Naive thymus-derived CD4-positive, alpha-beta T cell (primary cell): ENCODE measurements at regions of chr3 and their contacts with region 1.

Region 1: DNA sequence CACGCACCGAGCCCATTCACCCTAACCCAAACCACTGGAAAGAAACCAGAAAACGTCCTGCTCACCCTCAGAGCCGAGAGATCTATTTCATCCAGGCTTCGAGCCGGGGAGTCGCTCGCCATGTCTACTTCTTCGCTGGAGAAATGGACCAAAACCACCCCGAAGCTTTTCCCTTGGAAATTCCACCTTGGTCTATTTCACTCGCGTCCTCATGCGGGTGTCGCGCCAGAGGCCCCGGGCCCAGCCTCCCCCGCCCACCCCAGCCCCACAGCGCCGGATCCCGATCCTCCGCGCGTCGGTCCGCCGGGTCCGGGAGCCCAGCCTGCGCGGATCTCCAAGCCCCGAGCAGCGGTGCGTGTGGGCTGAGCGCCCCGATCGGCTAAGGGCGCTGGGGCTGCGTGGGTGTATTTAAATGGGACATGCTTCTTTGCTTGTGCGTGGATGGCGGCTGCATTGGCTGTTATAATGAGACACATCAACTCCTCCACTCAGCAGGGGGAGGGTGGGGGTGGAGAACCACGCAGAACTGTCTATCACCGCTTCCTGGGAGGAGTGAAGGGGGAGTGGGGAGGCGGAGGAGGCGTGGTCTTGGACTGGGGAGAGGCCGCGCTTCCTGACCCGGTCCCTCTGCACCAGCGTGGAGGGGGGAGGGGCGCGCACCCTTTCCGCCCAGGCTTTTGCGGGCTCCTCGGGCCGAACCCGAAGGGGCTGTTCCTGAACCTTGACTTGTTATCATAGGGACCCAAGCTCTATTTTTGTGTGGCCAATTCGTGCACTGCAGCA is at the start of gene TNIK:
- DNase-seq: peak; percentile 73 to 99 (median 91)
- ATAC-seq: peak; percentile 92
- H3K4me3 ChIP-seq: peak within 1 kb of the TSS; percentile 87
- H3K4me3 Mint-ChIP-seq: peak within 1 kb of the TSS; percentile 91 to 98 (median 94)
- H3K27ac ChIP-seq: peak within 1 kb of the TSS; percentile 81
- H3K27ac Mint-ChIP-seq: peak within 1 kb of the TSS; percentile 88 to 96 (median 91)
- H3K4me1 ChIP-seq: peaks cover 15 to 29% of the 10 kb centered on the region in 2 donors
- H3K4me1 Mint-ChIP-seq: peaks cover 19 to 46% (median 45%) of the 10 kb centered on the region in 7 donors
- H3K27me3 ChIP-seq: no peaks in the 10 kb centered on the region
- H3K27me3 Mint-ChIP-seq: no peaks in the 10 kb centered on the region
- total RNA-seq, gene TNIK: 61.6 to 74.9 (median 73.6) TPM

Region 2: GRCh38 chr3:169764452-169765274 is 1695.5 kb before region 1 on chr3 and contains the start of gene TERC:
- CTCF ChIA-PET with region 1: no interaction called
- POLR2A ChIA-PET with region 1: no interaction called
- intact Hi-C with region 1: loop called in 1 of 2 experiments (anchors 2 kb)
- DNase-seq: peak; percentile 72 to 96 (median 94)
- ATAC-seq: peak; percentile 91
- H3K4me3 ChIP-seq: peak within 1 kb of the TSS; percentile 88
- H3K4me3 Mint-ChIP-seq: peak within 1 kb of the TSS; percentile 89 to 99 (median 98)
- H3K27ac ChIP-seq: peak within 1 kb of the TSS; percentile 98
- H3K27ac Mint-ChIP-seq: peak within 1 kb of the TSS; percentile 96 to 100 (median 99)
- H3K4me1 ChIP-seq: peaks cover 11 to 18% of the 10 kb centered on the region in 2 donors
- H3K4me1 Mint-ChIP-seq: peaks cover 6 to 39% (median 33%) of the 10 kb centered on the region in 7 donors
- H3K27me3 ChIP-seq: no peaks in the 10 kb centered on the region
- H3K27me3 Mint-ChIP-seq: no peaks in the 10 kb centered on the region
- total RNA-seq, gene TERC: 4.0 to 19.4 (median 7.4) TPM

Region 3: DNA sequence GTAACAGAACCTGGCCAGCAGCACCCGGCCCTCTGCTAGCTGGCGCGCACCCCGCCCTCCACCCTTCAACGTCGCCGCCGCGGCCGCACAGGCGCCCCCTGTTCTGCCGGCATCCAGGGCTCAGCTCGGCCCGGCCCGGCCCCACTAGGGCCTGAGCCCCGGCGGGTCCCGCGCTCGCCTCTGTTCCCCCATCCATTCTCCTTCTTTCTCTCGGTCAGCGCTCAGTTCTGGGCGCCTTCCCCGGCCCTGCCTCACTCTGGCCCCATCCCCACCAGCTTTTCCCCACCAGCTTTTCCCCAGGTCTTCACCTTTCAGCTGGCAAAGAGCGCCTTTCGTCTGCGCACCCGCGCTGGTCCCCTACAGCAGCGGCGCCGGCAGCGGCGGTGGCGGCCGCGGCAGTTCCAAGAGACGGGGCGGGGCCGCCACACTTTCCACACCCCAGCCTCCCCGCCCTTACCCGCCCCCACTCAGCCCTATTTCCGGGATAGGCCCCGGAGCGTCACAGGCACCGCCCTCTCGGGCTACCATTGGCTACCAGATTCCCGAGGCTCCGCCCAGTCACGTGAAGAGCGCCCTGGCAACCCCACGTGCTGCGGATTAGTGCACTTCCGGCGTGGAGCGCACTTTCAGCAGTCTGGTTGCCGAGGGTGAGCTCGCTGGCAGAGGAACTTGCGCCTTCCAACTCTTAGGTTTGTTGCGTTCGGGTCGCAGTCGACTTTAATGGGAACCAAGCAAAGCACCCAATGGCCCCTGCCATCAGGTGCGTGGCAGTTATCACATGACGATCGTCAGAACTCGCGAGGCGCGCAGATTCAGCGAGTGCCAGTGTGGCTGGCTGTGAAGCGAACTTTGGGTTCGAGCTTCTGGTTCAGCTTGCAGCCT is 551.7 kb before region 1 on chr3 and contains the start of gene EIF5A2:
- CTCF ChIA-PET with region 1: no interaction called
- POLR2A ChIA-PET with region 1: no interaction called
- intact Hi-C with region 1: loop called (anchors 1 kb)
- DNase-seq: peak; percentile 87 to 97 (median 94)
- ATAC-seq: peak; percentile 98
- H3K4me3 ChIP-seq: peak within 1 kb of the TSS; percentile 50
- H3K4me3 Mint-ChIP-seq: peak within 1 kb of the TSS; percentile 90 to 98 (median 96)
- H3K27ac ChIP-seq: peak within 1 kb of the TSS; percentile 68
- H3K27ac Mint-ChIP-seq: peak within 1 kb of the TSS; percentile 89 to 96 (median 94)
- H3K4me1 ChIP-seq: peaks cover 15 to 16% of the 10 kb centered on the region in 2 donors
- H3K4me1 Mint-ChIP-seq: peaks cover 0 to 31% (median 22%) of the 10 kb centered on the region in 7 donors
- H3K27me3 ChIP-seq: no peaks in the 10 kb centered on the region
- H3K27me3 Mint-ChIP-seq: peaks cover 0 to 19% (median 0%) of the 10 kb centered on the region in 5 donors
- total RNA-seq, gene EIF5A2: 5.5 to 9.8 (median 7.4) TPM

Region 4: GRCh38 chr3:171257251-171258203 is 202.6 kb before region 1 on chr3:
- CTCF ChIA-PET with region 1: no interaction called
- POLR2A ChIA-PET with region 1: interaction called, 19 read pairs
- intact Hi-C with region 1: loop called in 1 of 2 experiments (anchors 2 kb)
- DNase-seq: peak in 3 of 9 donors; percentile 13 to 36 (median 33)
- ATAC-seq: peak; percentile 45
- H3K4me3 ChIP-seq: no peak overlapping the region
- H3K4me3 Mint-ChIP-seq: peak overlapping the region; percentile 16 to 70 (median 59)
- H3K27ac ChIP-seq: peak overlapping the region; percentile 70
- H3K27ac Mint-ChIP-seq: peak overlapping the region in 8 of 9 donors; percentile 91 to 99 (median 94)
- H3K4me1 ChIP-seq: peaks cover 53 to 70% of the 10 kb centered on the region in 2 donors
- H3K4me1 Mint-ChIP-seq: peaks cover 59 to 100% (median 93%) of the 10 kb centered on the region in 7 donors
- H3K27me3 ChIP-seq: no peaks in the 10 kb centered on the region
- H3K27me3 Mint-ChIP-seq: no peaks in the 10 kb centered on the region

Region 5: DNA sequence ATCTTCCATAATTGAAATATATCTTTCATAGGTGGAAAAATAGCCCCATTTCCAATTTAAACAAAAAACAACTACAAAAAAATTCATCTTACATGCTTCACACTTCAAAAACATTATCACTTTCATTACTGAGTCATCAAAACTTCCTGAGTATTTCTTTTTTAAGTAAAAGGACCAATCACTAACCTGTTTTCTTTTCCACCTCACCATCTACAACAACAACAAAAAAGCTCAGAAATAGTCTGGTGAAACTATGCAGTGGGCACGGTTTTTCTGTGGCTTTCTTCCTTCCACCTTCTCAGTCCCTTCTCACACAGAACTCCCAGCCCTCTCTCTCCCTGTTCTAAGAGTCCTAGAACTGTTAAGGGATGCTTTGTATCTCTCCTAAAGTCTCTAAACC is 20.4 kb after region 1 on chr3:
- CTCF ChIA-PET with region 1: interaction called, 3 read pairs
- POLR2A ChIA-PET with region 1: interaction called, 4 read pairs
- intact Hi-C with region 1: loop called (anchors 1 kb)
- DNase-seq: peak in 4 of 9 donors; percentile 28 to 40 (median 36)
- ATAC-seq: peak; percentile 82
- H3K4me3 ChIP-seq: no peak overlapping the region
- H3K4me3 Mint-ChIP-seq: peak overlapping the region in 7 of 10 donors; percentile 32 to 63 (median 49)
- H3K27ac ChIP-seq: no peak overlapping the region
- H3K27ac Mint-ChIP-seq: peak overlapping the region; percentile 39 to 91 (median 60)
- H3K4me1 ChIP-seq: peaks cover 11 to 12% of the 10 kb centered on the region in 2 donors
- H3K4me1 Mint-ChIP-seq: peaks cover 8 to 21% (median 11%) of the 10 kb centered on the region in 7 donors
- H3K27me3 ChIP-seq: no peaks in the 10 kb centered on the region
- H3K27me3 Mint-ChIP-seq: peaks cover 0 to 2% (median 0%) of the 10 kb centered on the region in 5 donors

Region 6: DNA sequence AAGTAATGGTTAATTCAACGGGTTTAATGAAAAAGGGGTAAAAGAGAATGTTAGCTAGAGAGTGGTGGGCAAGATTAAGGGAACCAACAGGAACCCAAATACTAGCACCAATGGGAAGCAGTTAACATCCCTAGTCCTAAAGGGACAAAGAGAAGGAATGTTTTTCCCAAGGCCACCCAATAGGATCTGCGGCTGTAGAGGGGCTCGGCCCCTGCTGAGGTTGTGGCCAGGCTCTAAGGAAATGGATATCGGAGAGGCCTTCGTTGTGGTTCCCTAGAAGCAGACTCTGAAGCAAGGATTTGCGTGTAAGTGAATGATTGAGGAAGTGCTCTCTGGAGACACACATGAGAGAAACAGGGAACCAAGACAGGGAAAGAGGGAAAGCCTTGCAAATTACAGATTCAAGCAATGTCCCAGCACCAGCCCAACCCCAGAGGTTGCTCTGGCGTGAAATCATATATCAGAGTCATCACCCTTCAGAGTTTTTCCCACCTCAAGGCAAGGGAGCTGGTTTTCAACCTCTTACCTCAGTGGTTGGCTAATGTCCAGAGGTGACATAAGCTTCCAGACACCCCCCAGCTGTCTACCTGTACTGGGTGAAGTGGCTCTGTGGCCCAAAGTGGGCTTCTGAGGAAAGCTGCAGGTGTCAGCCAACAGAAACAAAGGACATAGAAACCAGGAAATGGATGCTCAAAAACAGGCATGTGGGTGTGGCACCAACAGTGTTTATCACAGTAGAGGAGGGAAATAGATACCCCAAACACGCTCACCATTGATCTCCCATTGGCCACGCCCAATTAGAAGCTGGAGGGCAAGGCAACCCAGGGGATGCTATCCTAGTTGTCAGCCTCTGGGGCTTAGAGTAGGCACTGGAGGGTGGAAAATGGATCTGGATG is 83.9 kb after region 1 on chr3:
- CTCF ChIA-PET with region 1: no interaction called
- POLR2A ChIA-PET with region 1: no interaction called
- intact Hi-C with region 1: no loop called
- DNase-seq: no peak
- ATAC-seq: no peak
- H3K4me3 ChIP-seq: no peak overlapping the region
- H3K4me3 Mint-ChIP-seq: no peak overlapping the region
- H3K27ac ChIP-seq: no peak overlapping the region
- H3K27ac Mint-ChIP-seq: peak overlapping the region in 1 of 9 donors; percentile 9
- H3K4me1 ChIP-seq: peaks cover 0 to 4% of the 10 kb centered on the region in 2 donors
- H3K4me1 Mint-ChIP-seq: peaks cover 0 to 12% (median 5%) of the 10 kb centered on the region in 7 donors
- H3K27me3 ChIP-seq: no peaks in the 10 kb centered on the region
- H3K27me3 Mint-ChIP-seq: peaks cover 0 to 2% (median 0%) of the 10 kb centered on the region in 5 donors

Region 7: GRCh38 chr3:172039436-172040077 is 579.4 kb after region 1 on chr3 and contains the start of gene FNDC3B:
- CTCF ChIA-PET with region 1: no interaction called
- POLR2A ChIA-PET with region 1: no interaction called
- intact Hi-C with region 1: loop called in 1 of 2 experiments (anchors 1 kb)
- DNase-seq: peak; percentile 76 to 92 (median 89)
- ATAC-seq: peak; percentile 96
- H3K4me3 ChIP-seq: peak within 1 kb of the TSS; percentile 64
- H3K4me3 Mint-ChIP-seq: peak within 1 kb of the TSS; percentile 96 to 100 (median 98)
- H3K27ac ChIP-seq: peak within 1 kb of the TSS; percentile 97
- H3K27ac Mint-ChIP-seq: peak within 1 kb of the TSS; percentile 94 to 99 (median 97)
- H3K4me1 ChIP-seq: peaks cover 11 to 15% of the 10 kb centered on the region in 2 donors
- H3K4me1 Mint-ChIP-seq: peaks cover 27 to 73% (median 55%) of the 10 kb centered on the region in 7 donors
- H3K27me3 ChIP-seq: no peaks in the 10 kb centered on the region
- H3K27me3 Mint-ChIP-seq: peaks cover 0 to 19% (median 0%) of the 10 kb centered on the region in 5 donors
- total RNA-seq, gene FNDC3B: 21.1 to 78.6 (median 29.4) TPM